ENCODE measurements at regions of chr13 and their contacts with region 1.

Region 1: DNA sequence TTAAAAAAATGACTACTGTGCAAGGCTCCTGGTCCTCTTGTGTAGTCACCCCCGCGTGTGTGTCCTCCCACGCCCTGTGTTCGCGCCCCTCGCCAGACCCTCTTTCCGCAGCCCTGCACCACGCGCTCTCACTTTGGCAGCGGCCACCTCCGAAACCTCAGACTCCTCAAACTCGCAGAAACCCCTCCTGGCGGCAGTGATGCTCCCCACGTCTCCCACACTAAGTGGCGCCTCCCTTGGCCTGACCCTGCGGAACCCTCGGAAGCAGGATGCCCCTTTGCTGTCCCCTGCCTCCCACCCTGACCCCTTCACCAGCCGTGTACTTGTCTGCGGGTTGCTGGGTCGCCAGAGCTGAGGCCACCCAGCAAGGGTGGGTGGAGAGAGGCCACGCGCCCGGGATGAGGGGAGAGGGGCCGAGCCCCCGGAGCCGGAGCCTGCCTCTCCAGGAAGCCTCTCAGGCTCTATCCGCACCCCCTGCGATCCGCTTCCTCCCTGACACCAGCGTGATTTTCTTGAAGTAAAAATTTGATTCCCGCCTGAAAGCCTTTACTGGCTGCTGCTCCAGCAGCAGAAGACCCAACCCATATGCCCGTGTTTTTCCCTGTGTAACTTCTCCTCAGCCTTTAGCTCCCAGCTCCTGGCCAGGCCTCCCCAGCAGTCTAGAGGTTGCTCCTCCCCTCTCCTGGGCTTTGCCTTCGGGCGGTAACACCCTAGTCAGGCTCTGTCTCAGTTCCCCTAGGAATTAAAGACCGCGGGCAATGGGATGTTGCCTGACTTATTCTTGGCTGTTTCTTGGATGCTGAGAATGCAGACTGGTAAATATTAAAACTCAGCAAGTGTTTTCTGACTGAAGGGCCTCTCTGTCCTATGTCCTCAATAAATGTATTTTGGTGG is 55.2 kb downstream of the MIPEP start:
- DNase-seq: no peak
- H3K4me3 ChIP-seq: no peak overlapping the region
- H3K27ac ChIP-seq: no peak overlapping the region
- H3K4me1 ChIP-seq: no peaks in the 10 kb centered on the region
- H3K27me3 ChIP-seq: no peaks in the 10 kb centered on the region
- CTCF ChIP-seq: no peak
- POLR2A ChIP-seq: no peak

Region 2: DNA sequence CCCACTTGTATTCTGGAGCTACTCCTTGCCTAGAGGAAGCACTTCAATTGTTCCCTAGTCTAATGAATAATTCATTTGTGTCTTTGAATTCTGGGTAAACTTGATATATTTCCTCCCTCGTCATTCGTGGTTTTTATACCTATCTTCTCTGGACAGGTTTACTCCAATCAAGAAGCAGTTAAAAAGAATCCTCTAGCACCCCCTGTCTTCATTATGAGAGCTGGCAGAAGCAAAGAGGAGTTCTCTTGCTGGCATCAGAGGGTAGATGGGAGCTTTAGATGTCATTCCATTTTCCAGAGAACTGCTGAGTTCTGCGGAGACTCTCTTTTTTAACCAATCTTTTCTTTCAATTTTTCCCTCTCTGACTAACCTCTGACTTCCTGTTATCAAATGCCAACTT is 1535.5 kb before region 1 on chr13:
- intact Hi-C with region 1: loop called (anchors 5 kb)
- DNase-seq: no peak
- H3K4me3 ChIP-seq: no peak overlapping the region
- H3K27ac ChIP-seq: no peak overlapping the region
- H3K4me1 ChIP-seq: no peaks in the 10 kb centered on the region
- H3K27me3 ChIP-seq: no peaks in the 10 kb centered on the region
- CTCF ChIP-seq: no peak
- POLR2A ChIP-seq: no peak

Region 3: DNA sequence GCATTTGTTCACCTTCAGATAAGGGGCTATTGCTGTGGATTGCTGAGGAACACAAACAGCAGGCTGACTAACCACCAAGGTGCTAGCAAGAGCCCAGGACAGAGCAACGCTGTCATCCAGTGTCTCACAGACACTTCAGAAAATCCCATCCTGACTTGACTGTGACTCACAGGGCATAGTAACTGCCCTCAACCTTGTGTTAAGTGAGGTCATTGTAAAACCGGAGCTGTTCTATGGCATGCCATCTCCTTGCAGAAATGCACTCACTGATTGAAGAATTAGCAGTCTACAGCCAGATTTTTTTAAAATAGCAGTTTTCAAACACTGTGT is 212.7 kb before region 1 on chr13:
- intact Hi-C with region 1: no loop called
- DNase-seq: no peak
- H3K4me3 ChIP-seq: no peak overlapping the region
- H3K27ac ChIP-seq: no peak overlapping the region
- H3K4me1 ChIP-seq: no peaks in the 10 kb centered on the region
- H3K27me3 ChIP-seq: no peaks in the 10 kb centered on the region
- CTCF ChIP-seq: no peak
- POLR2A ChIP-seq: no peak

Region 4: GRCh38 chr13:23794267-23795161 is 39.5 kb before region 1 on chr13:
- intact Hi-C with region 1: no loop called
- DNase-seq: no peak
- H3K4me3 ChIP-seq: no peak overlapping the region
- H3K27ac ChIP-seq: peak overlapping the region; percentile 5
- H3K4me1 ChIP-seq: peaks cover 16% of the 10 kb centered on the region
- H3K27me3 ChIP-seq: no peaks in the 10 kb centered on the region
- CTCF ChIP-seq: no peak
- POLR2A ChIP-seq: no peak